GM10248 (cell line): ENCODE measurements at regions of chr1 and their contacts with region 1.

Region 1: GRCh38 chr1:40185951-40186864 is 25.0 kb downstream of the RLF start:
- DNase-seq: peak; percentile 76
- CTCF ChIP-seq: no peak

Region 2: GRCh38 chr1:40161125-40161887 is 24.9 kb before region 1 on chr1 and contains the start of gene RLF:
- CTCF ChIA-PET with region 1: interaction called, 12 read pairs
- POLR2A ChIA-PET with region 1: no interaction called
- DNase-seq: peak; percentile 96
- CTCF ChIP-seq: no peak

Region 3: DNA sequence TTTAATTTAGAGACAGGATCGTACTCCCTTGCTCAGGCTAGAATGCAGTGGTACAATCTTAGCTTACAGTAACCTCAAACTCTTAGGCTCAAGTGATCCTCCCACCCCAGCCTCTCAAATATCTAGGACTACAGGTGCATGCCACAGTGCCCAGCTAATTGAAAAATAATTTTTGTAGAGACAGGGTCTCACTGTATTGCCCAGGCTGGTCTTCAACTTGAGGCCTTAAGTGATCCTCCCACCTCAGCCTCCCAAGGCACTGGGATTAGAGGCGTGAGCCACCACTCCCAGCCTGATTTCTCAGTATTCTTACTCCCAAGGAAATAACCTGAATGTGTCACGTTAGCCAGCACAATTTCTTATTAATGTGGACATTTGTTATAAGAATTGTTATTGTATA is 15.2 kb before region 1 on chr1:
- CTCF ChIA-PET with region 1: interaction called, 33 read pairs
- POLR2A ChIA-PET with region 1: no interaction called
- DNase-seq: no peak
- CTCF ChIP-seq: no peak